ENCODE measurements at regions of chr4 and their contacts with region 1.

Region 1: GRCh38 chr4:113349430-113349829 is 300.0 kb downstream of the ANK2 start:
- DNase-seq: no peak
- ATAC-seq: no peak
- H3K4me3 ChIP-seq: no peak overlapping the region
- H3K27ac ChIP-seq: no peak overlapping the region
- H3K4me1 ChIP-seq: no peaks in the 10 kb centered on the region
- H3K27me3 ChIP-seq: peaks cover 18% of the 10 kb centered on the region
- CTCF ChIP-seq: no peak
- POLR2A ChIP-seq: no peak
- RAD21 ChIP-seq: no peak

Region 2: DNA sequence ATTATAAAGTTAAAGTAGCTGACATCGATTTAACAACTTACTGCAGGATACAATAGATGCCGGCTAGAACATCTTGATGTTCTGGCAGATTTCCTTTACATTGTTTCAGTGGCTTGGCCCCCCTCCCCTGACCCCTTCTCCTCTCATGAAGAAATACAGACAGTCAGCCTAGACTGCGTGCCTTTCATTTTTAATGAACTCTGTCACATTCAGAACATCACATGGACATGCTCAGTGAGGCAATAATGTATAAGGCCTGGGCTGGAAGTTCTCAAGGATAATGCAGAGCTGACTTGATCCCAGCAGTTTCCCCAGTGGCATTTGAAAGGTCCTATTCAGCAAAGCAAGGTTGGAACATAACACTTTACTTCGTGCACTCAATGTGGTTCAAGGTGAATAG is 60.7 kb before region 1 on chr4:
- CTCF ChIA-PET with region 1: no interaction called
- POLR2A ChIA-PET with region 1: no interaction called
- dilution Hi-C with region 1: no loop called
- in situ Hi-C with region 1: no loop called
- intact Hi-C with region 1: no loop called
- DNase-seq: no peak
- ATAC-seq: no peak
- H3K4me3 ChIP-seq: no peak overlapping the region
- H3K27ac ChIP-seq: no peak overlapping the region
- H3K4me1 ChIP-seq: peaks cover 5% of the 10 kb centered on the region
- H3K27me3 ChIP-seq: no peaks in the 10 kb centered on the region
- CTCF ChIP-seq: no peak
- POLR2A ChIP-seq: no peak
- RAD21 ChIP-seq: no peak

Region 3: DNA sequence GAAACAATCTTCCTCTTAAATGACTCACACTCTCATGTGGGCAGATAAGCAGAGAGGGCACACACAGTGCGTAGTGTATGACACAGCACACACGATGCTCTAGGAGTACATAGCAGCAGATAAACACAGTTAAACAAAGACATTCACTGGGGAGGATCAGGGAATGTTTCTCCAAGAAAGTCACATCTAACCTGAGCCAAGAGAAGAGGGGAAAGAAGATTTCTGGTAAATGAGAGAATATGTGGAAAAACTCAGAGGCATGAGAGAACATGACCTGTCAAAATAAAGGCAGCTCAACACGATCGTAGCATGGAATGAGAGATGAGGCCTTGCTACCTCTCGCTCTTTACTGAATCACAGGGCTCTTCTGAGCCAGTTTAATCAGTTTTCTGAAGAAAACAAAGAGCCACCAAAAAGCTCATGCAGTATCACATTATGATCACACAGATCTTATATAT is 48.9 kb before region 1 on chr4:
- CTCF ChIA-PET with region 1: no interaction called
- POLR2A ChIA-PET with region 1: no interaction called
- dilution Hi-C with region 1: no loop called
- in situ Hi-C with region 1: no loop called
- intact Hi-C with region 1: loop called (anchors 5 kb)
- DNase-seq: peak; percentile 90
- ATAC-seq: peak; percentile 81
- H3K4me3 ChIP-seq: no peak overlapping the region
- H3K27ac ChIP-seq: no peak overlapping the region
- H3K4me1 ChIP-seq: no peaks in the 10 kb centered on the region
- H3K27me3 ChIP-seq: no peaks in the 10 kb centered on the region
- CTCF ChIP-seq: no peak
- POLR2A ChIP-seq: no peak
- RAD21 ChIP-seq: no peak